ENCODE measurements at regions of chr1 and their contacts with region 1.

Region 1: DNA sequence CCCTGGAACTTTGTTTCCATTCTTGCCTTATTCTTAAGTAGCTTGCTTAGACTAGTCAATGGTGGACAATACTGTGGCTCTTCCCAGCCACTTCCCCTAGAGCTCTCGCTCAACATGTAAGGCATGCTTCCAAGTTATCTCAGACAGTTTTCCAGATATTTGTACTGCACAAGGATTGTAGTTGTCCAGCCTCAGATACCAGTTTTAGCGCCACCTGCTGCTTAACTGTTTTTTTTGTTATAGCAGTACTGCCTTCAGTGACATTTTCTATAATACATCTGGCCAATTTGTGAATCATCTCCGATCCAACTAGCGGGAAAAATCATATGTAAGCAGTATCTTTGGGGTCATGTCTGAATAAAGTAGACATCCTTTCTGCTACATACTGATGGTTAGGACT is 346.7 kb upstream of the ADGRL4 start:
- DNase-seq: peak in 2 of 5 donors; percentile 18 to 20
- ATAC-seq: peak in 2 of 4 donors; percentile 36 to 38
- H3K4me3 ChIP-seq: no peak overlapping the region
- H3K27ac ChIP-seq: no peak overlapping the region
- H3K4me1 ChIP-seq: no peaks in the 10 kb centered on the region
- H3K27me3 ChIP-seq: no peaks in the 10 kb centered on the region
- CTCF ChIP-seq: peak in 11 of 12 donors; percentile 19 to 59 (median 33)
- POLR2A ChIP-seq: no peak

Region 2: DNA sequence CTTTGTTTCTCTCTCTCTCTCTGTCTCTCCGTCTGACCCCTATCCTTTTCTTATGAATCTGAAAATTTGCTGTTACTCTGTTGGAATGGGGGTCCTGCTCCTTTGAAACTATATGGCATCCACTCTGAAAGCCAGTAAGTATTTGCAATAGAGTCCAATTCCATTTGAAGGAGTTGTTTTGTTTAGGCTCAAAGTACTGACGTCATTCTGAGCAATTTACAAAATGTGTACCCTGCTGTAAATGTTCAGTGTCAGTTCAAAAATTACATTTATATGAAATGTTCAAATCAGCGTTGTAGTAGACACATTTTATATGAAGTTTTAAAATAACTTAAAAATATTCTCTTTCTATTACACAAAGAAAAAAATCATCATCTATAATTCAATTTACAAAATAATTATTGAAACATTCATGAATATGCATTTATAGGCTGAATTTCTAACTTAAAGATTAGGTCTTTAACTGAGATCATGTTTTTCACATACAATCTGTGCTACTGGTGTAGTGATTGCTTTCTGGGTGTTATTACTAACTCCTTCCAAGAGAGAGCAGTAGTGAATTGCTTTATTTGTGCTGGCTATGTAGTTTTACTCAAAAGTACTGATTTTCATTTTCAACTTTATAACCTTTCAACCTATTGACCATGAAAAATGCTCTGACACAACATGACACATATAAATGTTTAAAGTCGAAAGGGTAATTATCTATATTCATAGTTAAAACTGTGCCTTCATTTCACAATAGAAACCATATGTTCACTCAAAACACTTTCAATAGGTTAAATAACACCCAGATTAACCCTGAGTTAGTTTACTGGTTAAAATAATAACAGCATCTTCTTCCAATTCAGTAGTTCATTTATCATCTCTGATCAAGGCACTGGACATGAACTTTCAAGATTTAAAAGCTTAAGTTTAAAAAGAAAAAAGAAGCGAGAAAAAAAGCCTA is 93.6 kb before region 1 on chr1:
- intact Hi-C with region 1: loop called in 8 of 10 experiments (anchors 2 to 10 kb)
- DNase-seq: no peak
- ATAC-seq: no peak
- H3K4me3 ChIP-seq: no peak overlapping the region
- H3K27ac ChIP-seq: no peak overlapping the region
- H3K4me1 ChIP-seq: no peaks in the 10 kb centered on the region
- H3K27me3 ChIP-seq: no peaks in the 10 kb centered on the region
- CTCF ChIP-seq: peak; percentile 19 to 67 (median 44)
- POLR2A ChIP-seq: no peak

Region 3: DNA sequence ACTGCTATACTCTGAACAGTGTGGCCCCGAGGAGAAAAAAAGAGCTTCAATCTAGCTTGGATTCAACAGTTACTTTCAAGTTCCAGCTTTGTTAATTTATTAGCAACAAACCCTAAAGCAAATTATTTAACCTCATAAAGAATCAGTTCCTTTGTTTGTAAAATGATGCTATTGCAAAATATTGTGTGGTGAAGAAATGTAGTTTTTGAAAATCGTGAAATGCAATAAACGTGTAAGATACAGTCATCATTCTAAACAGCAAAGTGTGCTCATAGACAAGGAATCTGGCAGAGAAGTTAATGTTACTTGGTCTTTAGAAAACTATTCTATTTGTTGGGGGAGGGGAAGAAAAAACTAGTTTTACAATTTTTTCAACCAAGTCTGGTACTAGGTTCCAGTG is 49.1 kb before region 1 on chr1:
- intact Hi-C with region 1: no loop called
- DNase-seq: no peak
- ATAC-seq: no peak
- H3K4me3 ChIP-seq: no peak overlapping the region
- H3K27ac ChIP-seq: no peak overlapping the region
- H3K4me1 ChIP-seq: no peaks in the 10 kb centered on the region
- H3K27me3 ChIP-seq: no peaks in the 10 kb centered on the region
- CTCF ChIP-seq: no peak
- POLR2A ChIP-seq: no peak

Region 4: DNA sequence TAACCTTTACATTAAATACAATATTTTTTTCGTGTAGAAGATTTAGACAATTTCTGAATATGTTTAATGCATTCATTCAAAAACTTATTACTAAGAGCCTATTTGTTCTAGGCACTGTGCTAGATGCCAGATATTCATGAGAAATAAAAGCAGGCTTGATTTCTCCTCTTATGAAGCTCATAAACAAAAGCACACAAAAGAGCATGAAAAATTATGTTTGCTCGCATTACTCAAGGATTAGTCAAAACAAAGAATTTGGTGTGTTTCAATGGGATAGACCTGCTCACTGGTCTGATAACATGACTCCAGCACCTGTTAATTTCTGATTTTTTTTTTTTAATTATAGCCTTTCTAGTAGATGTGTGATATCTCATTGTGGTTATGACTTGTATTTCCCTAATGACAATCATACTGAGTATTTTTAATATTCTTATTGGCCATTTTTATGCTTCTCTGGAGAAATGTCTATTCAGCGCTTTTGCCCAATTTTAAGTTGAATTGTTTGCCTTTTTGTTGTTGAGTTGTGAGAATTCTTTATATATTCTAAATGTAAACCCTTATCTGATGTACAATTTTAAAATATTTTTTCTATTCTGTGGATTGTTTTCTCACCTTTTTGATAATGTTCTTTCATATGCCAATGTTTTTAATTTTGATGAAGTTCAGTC is 35.6 kb after region 1 on chr1:
- intact Hi-C with region 1: no loop called
- DNase-seq: no peak
- ATAC-seq: no peak
- H3K4me3 ChIP-seq: no peak overlapping the region
- H3K27ac ChIP-seq: no peak overlapping the region
- H3K4me1 ChIP-seq: no peaks in the 10 kb centered on the region
- H3K27me3 ChIP-seq: no peaks in the 10 kb centered on the region
- CTCF ChIP-seq: no peak
- POLR2A ChIP-seq: no peak